Activated B cell treated with CpG ODN at 0.5 μM for 24 hours (primary cell): ENCODE measurements at regions of chr1 and their contacts with region 1.

Region 1: GRCh38 chr1:2141036-2141435 is 53.5 kb downstream of the FAAP20 start:
- DNase-seq: no peak
- ATAC-seq: no peak
- H3K4me3 Mint-ChIP-seq: no peak overlapping the region
- H3K27ac Mint-ChIP-seq: no peak overlapping the region
- H3K4me1 Mint-ChIP-seq: peaks cover 4% of the 10 kb centered on the region
- H3K27me3 Mint-ChIP-seq: no peaks in the 10 kb centered on the region
- CTCF ChIP-seq: no peak

Region 2: GRCh38 chr1:1943834-1944570 is 197.0 kb before region 1 on chr1:
- CTCF ChIA-PET with region 1: interaction called, 3 read pairs
- POLR2A ChIA-PET with region 1: no interaction called
- intact Hi-C with region 1: loop called (anchors 2 kb)
- DNase-seq: peak; percentile 63
- ATAC-seq: peak; percentile 94
- H3K4me3 Mint-ChIP-seq: peak overlapping the region; percentile 9
- H3K27ac Mint-ChIP-seq: no peak overlapping the region
- H3K4me1 Mint-ChIP-seq: peaks cover 6% of the 10 kb centered on the region
- H3K27me3 Mint-ChIP-seq: peaks cover 2% of the 10 kb centered on the region
- CTCF ChIP-seq: peak; percentile 48

Region 3: GRCh38 chr1:2072109-2072806 is 68.8 kb before region 1 on chr1:
- CTCF ChIA-PET with region 1: no interaction called
- POLR2A ChIA-PET with region 1: no interaction called
- intact Hi-C with region 1: no loop called
- DNase-seq: no peak
- ATAC-seq: no peak
- H3K4me3 Mint-ChIP-seq: no peak overlapping the region
- H3K27ac Mint-ChIP-seq: no peak overlapping the region
- H3K4me1 Mint-ChIP-seq: no peaks in the 10 kb centered on the region
- H3K27me3 Mint-ChIP-seq: no peaks in the 10 kb centered on the region
- CTCF ChIP-seq: no peak

Region 4: DNA sequence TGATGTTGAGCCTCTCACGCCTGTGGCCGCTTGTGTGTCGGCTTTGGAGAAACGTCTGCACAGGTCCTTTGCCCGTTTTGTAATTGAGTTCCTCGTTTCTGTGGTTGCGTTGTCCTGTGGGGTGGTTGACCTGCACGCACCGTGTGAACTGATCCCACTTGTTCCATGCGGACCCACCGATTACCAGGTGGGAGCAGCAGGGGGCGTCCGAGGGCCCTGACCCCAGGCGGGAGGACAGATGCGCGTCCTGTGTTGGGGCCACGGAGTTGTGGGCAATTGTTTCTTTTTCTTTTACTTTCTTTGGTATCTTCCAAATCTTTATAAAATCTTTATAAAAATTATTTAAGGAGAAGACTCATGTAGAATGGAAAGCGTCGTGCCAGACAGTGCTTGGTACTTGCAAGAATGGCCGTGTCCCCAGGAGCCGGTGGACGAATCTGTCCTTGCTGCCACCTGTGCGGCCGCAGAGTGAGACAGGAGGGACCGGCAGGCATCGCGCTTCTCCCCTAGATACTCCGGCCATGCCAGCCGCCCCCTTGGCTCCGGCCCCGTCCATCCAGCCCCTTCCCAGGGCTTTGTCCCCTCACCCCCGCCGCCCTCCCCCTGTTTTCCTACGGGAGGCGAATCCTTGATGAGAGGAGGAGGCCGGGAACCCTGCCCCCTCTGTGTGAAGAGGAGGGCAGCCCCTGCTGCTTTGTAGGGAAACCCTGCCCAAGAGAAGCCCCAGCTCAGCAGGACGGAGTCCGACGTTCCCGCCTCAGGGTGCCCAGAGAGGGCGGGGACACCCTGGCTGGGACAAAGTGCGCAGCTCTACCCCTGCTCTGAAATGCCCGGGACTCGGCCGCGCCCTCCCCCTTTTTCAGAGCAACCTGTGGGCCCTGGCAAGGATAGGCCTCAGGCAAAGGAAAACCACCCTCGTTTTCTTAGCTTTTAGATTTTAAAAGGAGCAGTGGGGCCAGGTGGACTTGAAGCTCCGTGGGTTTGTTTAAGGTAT is 49.1 kb before region 1 on chr1:
- CTCF ChIA-PET with region 1: interaction called, 28 read pairs
- POLR2A ChIA-PET with region 1: no interaction called
- intact Hi-C with region 1: loop called (anchors 1 kb)
- DNase-seq: peak; percentile 50
- ATAC-seq: peak; percentile 61
- H3K4me3 Mint-ChIP-seq: no peak overlapping the region
- H3K27ac Mint-ChIP-seq: no peak overlapping the region
- H3K4me1 Mint-ChIP-seq: peaks cover 9% of the 10 kb centered on the region
- H3K27me3 Mint-ChIP-seq: no peaks in the 10 kb centered on the region
- CTCF ChIP-seq: no peak

Region 5: DNA sequence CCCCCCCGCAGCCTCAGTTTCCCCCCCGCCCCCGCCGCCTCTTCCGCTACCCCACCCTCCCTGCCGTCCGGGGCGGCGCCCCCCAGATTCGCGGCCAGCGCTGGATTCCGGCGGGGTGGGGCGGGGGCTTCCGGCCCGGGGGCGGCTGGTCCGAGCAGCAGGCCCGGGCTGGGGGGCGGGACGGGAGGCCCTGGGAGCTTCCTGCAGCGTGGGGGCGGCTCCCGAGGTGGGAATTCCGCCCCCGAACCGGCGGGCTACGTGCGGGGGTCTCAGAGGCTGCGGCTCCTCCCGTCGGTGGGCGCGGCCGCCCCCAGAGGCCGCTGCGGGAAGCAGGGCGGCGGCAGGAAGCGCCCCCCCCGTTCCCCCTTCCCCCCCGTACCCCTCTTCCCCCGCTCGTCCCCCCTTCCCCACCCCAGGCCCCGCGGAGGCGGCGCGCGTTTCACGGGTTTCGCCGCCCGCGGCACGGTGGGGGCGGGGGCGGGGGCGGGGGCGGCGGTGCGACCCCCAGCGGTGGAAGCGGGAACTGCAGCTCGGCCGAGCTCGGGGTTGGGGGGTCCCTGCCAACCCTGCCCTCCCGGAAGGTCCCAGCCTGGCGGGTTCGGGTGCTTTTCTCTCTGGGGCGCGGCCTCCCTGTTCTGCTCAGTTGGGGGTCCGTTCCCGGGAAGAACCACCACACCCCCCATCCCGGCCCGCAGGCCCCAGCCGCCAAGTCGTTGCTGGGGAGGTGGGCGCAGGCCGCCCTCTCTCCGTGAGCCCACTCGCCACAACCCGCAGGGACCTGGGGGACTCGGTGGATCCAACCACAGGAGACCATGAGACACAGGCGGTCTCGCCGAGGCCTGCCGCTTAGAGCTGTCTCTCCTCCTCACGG is 174.0 kb after region 1 on chr1:
- CTCF ChIA-PET with region 1: no interaction called
- POLR2A ChIA-PET with region 1: no interaction called
- intact Hi-C with region 1: no loop called
- DNase-seq: peak; percentile 78
- ATAC-seq: peak; percentile 58
- H3K4me3 Mint-ChIP-seq: peak overlapping the region; percentile 66
- H3K27ac Mint-ChIP-seq: peak overlapping the region; percentile 18
- H3K4me1 Mint-ChIP-seq: peaks cover 37% of the 10 kb centered on the region
- H3K27me3 Mint-ChIP-seq: no peaks in the 10 kb centered on the region
- CTCF ChIP-seq: peak; percentile 83